ENCODE measurements at regions of chr2 and their contacts with region 1.

Region 1: DNA sequence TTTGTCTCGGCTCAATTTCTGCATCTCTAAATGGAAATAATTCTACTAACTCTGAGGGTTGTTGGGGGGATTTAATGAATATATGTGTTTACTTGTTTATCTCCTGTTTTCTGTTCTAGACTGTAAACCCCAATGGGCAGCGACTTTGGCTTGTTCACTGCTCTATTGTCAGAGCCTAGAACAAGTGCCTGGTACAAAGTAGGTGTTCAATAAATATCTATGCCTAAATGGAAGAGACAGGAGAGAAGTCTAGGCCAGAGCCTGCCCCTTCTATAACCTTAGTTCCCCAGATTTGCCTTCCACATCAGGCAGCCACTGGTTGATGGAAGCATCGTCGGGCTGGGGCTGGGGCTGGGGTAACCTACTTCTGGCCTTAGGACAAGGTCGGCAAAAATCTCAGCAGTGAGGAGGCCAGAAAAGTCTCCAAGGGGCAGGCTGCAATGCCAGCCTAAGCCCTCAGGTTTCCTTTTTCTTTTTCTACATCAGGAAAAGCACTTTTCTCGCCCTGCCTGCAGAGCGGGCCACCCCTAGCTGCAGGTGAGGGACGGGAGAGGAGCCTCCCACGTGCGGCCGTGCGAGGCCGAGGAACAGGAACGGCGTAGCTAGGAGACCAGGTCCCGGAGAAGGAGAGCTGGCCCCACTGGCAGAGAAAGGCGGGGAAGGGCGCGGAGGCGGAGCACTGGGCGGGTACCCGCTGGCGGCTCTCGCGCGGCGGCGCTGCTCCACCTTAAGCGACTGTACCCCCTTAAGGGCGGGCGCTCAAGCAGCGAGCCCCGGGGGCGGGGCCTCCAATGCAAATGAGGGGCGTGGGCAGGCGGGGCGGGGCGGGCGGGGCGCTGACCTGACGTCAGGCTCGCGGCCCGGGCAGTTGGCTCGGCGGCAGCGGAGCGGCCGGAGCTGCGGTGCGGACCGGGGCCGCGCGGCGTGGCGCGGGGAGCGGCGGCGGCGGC is at the start of gene CNNM4:
- DNase-seq: peak; percentile 94
- H3K4me3 Mint-ChIP-seq: peak within 1 kb of the TSS; percentile 81
- H3K27ac Mint-ChIP-seq: peak within 1 kb of the TSS; percentile 70
- H3K4me1 Mint-ChIP-seq: peaks cover 48% of the 10 kb centered on the region
- H3K27me3 Mint-ChIP-seq: no peaks in the 10 kb centered on the region
- total RNA-seq, gene CNNM4: 5.6 to 6.0 TPM

Region 2: GRCh38 chr2:96145036-96145847 is 615.1 kb before region 1 on chr2 and contains the start of gene DUSP2:
- CTCF ChIA-PET with region 1: no interaction called
- intact Hi-C with region 1: loop called (anchors 5 kb)
- DNase-seq: peak; percentile 95
- H3K4me3 Mint-ChIP-seq: peak within 1 kb of the TSS; percentile 96
- H3K27ac Mint-ChIP-seq: peak within 1 kb of the TSS; percentile 99
- H3K4me1 Mint-ChIP-seq: peaks cover 52% of the 10 kb centered on the region
- H3K27me3 Mint-ChIP-seq: no peaks in the 10 kb centered on the region
- total RNA-seq, gene DUSP2: 429 to 463 TPM

Region 3: DNA sequence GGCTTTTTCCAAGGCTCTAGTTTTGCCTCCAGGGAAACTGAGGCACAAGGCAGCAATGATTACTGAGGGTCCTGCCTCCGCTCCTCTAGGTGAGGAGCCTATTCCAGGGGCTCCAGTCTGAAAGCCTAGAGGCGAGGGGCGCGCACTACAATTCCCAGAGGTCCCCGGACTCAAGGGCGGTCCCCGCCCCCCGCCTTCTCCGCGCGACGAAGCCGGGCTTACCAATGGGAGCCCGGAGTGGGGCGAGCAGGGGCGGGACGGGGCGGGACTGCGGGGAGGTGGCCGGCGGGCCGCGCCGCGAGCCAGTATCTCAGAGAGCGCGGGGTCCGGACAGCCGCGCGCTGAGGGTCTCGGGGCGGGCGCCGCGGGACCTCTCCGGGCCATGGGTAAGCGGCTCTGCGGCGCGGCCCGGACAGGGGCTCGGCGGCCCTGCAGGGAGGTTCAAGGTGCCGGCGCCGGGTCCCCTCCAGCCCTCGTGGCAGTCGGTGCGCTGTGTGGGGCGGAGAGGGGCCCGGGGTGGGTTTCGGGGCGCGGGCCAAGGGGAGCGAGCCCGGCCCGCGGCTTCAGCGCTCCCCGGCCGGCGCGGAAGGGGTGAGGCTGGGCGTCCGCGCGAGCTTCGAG is 223.8 kb before region 1 on chr2 and contains the start of gene ARID5A:
- CTCF ChIA-PET with region 1: no interaction called
- intact Hi-C with region 1: loop called (anchors 1 kb)
- DNase-seq: peak; percentile 96
- H3K4me3 Mint-ChIP-seq: peak within 1 kb of the TSS; percentile 96
- H3K27ac Mint-ChIP-seq: peak within 1 kb of the TSS; percentile 99
- H3K4me1 Mint-ChIP-seq: peaks cover 60% of the 10 kb centered on the region
- H3K27me3 Mint-ChIP-seq: no peaks in the 10 kb centered on the region
- total RNA-seq, gene ARID5A: 349 to 351 TPM

Region 4: DNA sequence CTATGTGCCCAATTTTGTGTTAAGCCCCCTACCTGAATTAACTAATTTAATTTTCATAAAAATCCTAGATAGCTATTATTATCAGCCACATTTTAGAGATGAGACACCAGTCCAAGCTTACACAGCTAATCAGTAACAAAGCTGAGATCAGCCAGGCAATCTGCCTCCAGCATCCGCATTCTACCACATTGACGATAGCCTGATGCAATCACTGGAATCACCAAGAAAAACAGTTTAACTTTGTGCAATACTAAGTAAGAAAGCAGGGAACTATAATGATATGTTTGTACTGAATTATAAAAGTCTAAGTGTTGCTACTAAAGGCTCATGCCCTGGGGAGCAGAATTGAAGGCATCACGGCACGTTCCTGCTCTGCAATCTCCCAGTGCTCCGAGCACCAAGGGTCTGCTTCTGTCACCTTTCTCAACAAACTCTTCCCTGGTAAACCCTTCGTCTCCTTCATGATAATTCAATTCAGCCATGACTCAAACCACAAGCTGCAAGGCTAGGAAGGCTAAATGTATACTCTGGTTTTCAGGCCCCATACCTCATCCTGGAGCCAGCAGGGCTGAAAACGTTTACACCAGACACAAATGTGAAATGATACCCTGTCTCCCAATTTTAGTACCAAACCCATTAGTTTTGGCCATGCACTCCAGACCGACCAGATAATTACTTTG is 141.6 kb before region 1 on chr2:
- CTCF ChIA-PET with region 1: interaction called, 3 read pairs
- intact Hi-C with region 1: loop called (anchors 5 kb)
- DNase-seq: no peak
- H3K4me3 Mint-ChIP-seq: no peak overlapping the region
- H3K27ac Mint-ChIP-seq: no peak overlapping the region
- H3K4me1 Mint-ChIP-seq: peaks cover 19% of the 10 kb centered on the region
- H3K27me3 Mint-ChIP-seq: no peaks in the 10 kb centered on the region

Region 5: GRCh38 chr2:96692086-96692971 is 68.0 kb before region 1 on chr2:
- CTCF ChIA-PET with region 1: no interaction called
- intact Hi-C with region 1: no loop called
- DNase-seq: no peak
- H3K4me3 Mint-ChIP-seq: no peak overlapping the region
- H3K27ac Mint-ChIP-seq: no peak overlapping the region
- H3K4me1 Mint-ChIP-seq: no peaks in the 10 kb centered on the region
- H3K27me3 Mint-ChIP-seq: no peaks in the 10 kb centered on the region

Region 6: GRCh38 chr2:96739633-96740428 is 20.5 kb before region 1 on chr2 and contains the start of gene LMAN2L:
- CTCF ChIA-PET with region 1: interaction called, 12 read pairs
- intact Hi-C with region 1: loop called (anchors 1 kb)
- DNase-seq: peak; percentile 99
- H3K4me3 Mint-ChIP-seq: peak within 1 kb of the TSS; percentile 97
- H3K27ac Mint-ChIP-seq: peak within 1 kb of the TSS; percentile 77
- H3K4me1 Mint-ChIP-seq: peaks cover 33% of the 10 kb centered on the region
- H3K27me3 Mint-ChIP-seq: no peaks in the 10 kb centered on the region
- total RNA-seq, gene LMAN2L: 4.0 to 4.8 TPM

Region 7: GRCh38 chr2:96806468-96807126 is 46.3 kb after region 1 on chr2:
- CTCF ChIA-PET with region 1: interaction called, 11 read pairs
- intact Hi-C with region 1: loop called (anchors 1 kb)
- DNase-seq: peak; percentile 41
- H3K4me3 Mint-ChIP-seq: no peak overlapping the region
- H3K27ac Mint-ChIP-seq: peak overlapping the region; percentile 41
- H3K4me1 Mint-ChIP-seq: peaks cover 11% of the 10 kb centered on the region
- H3K27me3 Mint-ChIP-seq: no peaks in the 10 kb centered on the region

Region 8: DNA sequence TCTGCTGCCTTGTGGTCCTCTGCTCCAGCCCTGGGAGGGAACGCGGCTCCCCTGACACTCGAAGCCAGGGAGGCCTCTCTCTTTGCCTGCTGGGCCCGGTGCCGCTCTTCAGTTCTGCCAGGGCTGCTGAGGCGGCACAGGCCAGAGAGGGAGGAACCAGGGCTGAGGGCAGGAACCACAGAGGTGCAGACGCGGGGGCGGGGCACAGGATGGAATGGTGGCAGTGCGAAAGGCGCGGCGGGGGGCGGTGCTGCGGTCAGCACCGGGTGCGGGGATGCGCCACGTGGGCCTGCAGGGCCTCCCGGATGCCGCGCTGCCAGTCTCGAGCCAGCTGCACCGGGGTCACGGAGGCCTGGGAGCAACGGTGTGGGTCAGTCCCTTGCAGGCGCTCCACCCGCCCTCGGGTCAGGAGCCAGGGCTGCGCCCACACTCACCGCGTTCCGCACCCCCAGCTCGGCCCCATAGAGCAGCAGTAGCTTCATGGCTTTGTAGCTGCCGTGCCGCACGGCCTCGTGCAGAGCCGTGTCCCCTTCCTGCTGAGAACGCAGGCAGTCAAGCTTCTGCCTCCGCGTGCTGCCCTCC is 79.1 kb after region 1 on chr2:
- CTCF ChIA-PET with region 1: no interaction called
- intact Hi-C with region 1: no loop called
- DNase-seq: peak; percentile 89
- H3K4me3 Mint-ChIP-seq: peak overlapping the region; percentile 49
- H3K27ac Mint-ChIP-seq: no peak overlapping the region
- H3K4me1 Mint-ChIP-seq: peaks cover 11% of the 10 kb centered on the region
- H3K27me3 Mint-ChIP-seq: no peaks in the 10 kb centered on the region

Region 9: DNA sequence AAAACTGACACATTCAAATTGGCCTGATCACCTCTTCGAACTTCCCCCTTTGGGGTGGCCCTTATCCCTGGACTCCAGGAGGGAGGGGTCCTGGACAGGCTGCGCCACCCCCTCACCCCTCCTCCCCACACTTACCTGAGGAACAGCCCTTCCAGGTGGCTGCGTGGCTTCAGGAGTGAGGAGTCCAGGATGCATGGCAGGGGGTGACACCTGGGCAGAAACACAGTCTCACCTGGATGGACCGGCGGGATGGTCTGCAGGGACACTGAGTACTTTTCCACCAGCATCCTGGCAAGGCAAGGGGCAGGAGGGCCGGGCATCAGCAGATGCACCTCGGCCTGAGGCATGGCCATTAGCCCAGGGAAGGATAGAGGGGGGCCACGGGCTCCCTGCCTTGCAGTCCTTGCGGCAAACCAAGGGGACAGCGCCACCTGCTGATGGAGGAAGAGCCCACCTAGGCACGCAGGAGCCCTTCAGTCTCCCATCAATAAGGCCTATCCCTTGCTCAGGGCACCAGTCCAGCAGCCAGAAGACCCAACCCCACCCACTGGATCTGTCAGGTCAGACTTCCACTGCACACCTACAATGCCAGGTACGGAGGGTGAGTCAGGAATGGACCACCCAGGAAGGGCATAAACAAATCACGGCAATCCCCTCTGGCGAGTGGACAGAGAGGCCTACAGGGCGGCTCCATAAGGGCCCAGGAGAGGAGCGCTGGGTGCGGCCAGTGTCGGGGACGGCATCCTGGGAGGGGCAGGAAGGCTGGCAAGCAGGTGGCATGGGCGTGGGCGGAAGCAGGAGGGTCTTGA is 200.0 kb after region 1 on chr2:
- CTCF ChIA-PET with region 1: interaction called, 4 read pairs
- intact Hi-C with region 1: loop called (anchors 5 kb)
- DNase-seq: peak; percentile 92
- H3K4me3 Mint-ChIP-seq: no peak overlapping the region
- H3K27ac Mint-ChIP-seq: no peak overlapping the region
- H3K4me1 Mint-ChIP-seq: peaks cover 49% of the 10 kb centered on the region
- H3K27me3 Mint-ChIP-seq: no peaks in the 10 kb centered on the region